Common myeloid progenitor, CD34-positive (primary cell): ENCODE measurements at regions of chr1 and their contacts with region 1.

Region 1: GRCh38 chr1:204363335-204364124 is 3.8 kb upstream of the PLEKHA6 start:
- DNase-seq: peak; percentile 80 to 86 (median 83)
- H3K4me3 ChIP-seq: peak overlapping the region; percentile 20 to 77 (median 54)
- H3K27ac ChIP-seq: no peak overlapping the region
- H3K4me1 ChIP-seq: peaks cover 0 to 59% (median 52%) of the 10 kb centered on the region in 4 experiments
- H3K27me3 ChIP-seq: no peaks in the 10 kb centered on the region

Region 2: GRCh38 chr1:204162231-204163074 is 201.1 kb before region 1 on chr1:
- CTCF ChIA-PET with region 1: interaction called, 113 read pairs
- POLR2A ChIA-PET with region 1: no interaction called
- DNase-seq: peak; percentile 67 to 82 (median 75)
- H3K4me3 ChIP-seq: no peak overlapping the region
- H3K27ac ChIP-seq: no peak overlapping the region
- H3K4me1 ChIP-seq: peaks cover 2 to 20% (median 18%) of the 10 kb centered on the region in 4 experiments
- H3K27me3 ChIP-seq: no peaks in the 10 kb centered on the region

Region 3: DNA sequence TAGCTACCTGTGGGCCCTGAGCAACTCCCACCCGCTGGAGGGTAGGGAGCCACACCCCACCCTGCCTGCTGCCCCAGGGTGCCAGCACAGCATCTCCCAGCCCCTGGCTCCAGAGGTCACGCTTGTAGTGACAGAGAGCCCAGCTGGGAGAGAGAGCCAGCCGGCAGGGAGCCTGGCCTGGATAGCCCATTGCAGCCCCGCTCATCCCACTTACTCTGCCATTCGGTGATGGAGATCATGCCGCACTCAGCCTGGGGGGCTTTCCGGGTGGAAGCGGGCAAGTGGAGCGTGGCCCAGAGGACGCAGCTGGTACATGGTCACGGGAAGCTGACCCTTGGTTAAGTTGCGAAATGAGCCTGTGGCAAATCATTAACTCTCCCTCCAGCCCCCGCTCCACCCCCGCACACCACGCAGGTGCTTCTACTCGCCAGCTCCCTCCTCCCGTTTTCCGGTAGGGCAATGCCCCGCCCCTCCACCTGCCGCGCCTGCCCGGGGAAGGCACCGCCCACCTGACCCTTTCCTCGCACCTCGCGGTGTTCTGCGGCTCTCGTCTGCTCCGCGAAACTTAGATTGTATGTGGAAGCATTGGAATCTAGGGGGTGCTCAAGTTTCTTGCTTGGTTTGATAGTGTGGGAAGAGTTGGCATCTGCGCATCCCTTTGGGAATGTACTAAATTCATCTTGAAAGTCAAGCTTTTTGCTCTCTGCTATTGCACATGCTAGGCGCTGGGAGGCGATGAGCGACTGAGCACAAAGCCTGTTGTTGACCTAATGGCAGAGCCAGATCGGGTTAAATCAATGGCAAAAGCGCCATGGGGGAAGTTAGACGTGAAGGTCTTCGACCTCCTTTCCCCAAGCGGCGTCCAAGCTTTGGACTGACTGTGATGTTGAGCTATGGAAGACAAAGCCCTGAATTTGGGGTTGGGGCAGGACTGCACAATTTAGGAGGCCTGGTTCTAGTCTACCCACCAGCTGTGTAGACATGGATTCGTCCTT is 149.6 kb before region 1 on chr1 and contains the start of gene GOLT1A:
- CTCF ChIA-PET with region 1: interaction called, 74 read pairs
- POLR2A ChIA-PET with region 1: no interaction called
- DNase-seq: peak; percentile 61 to 74 (median 70)
- H3K4me3 ChIP-seq: peak within 1 kb of the TSS; percentile 13 to 75 (median 35)
- H3K27ac ChIP-seq: no peak within 1 kb of the TSS
- H3K4me1 ChIP-seq: peaks cover 0 to 19% (median 16%) of the 10 kb centered on the region in 4 experiments
- H3K27me3 ChIP-seq: no peaks in the 10 kb centered on the region

Region 4: DNA sequence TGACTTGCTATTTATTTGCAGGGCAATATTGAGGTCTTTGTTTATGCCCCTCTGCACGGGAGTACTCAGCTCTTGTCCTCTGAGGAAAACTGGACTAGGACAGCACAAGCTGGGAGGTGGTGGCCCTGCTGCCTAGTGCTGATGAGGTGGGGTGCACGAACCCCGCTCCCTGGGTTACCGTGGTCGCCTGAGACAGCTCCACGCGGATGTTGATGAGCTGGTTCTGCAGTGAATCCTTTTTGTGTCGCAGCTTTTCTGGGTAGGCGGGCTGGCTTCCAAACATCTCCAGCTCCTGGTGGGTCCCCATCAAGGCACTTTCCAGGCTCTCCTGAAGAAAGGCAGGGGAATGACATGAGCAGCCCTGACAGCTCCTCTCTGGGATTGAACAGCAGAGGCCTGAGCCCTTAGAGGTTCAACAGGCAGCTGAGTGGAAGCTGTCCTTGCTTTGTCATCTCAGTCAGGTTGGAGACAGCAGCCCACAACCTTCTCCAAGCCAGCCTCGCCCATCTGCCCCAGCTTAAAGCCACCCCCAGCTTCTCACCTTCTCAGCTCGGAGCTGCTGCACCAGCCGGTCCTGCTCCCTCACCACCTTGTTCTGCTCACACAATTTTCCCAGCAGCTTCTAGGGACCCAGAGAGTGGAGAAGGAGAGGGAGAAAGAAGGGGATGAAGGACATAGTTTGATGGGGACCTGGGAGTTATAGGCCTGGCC is 114.7 kb before region 1 on chr1:
- CTCF ChIA-PET with region 1: interaction called, 314 read pairs
- POLR2A ChIA-PET with region 1: no interaction called
- DNase-seq: no peak
- H3K4me3 ChIP-seq: no peak overlapping the region
- H3K27ac ChIP-seq: no peak overlapping the region
- H3K4me1 ChIP-seq: no peaks in the 10 kb centered on the region
- H3K27me3 ChIP-seq: no peaks in the 10 kb centered on the region

Region 5: GRCh38 chr1:204285406-204286305 is 77.9 kb before region 1 on chr1:
- CTCF ChIA-PET with region 1: interaction called, 79 read pairs
- POLR2A ChIA-PET with region 1: interaction called, 3 read pairs
- DNase-seq: no peak
- H3K4me3 ChIP-seq: peak overlapping the region in 2 of 7 experiments; percentile 56 to 64
- H3K27ac ChIP-seq: peak overlapping the region; percentile 10 to 70
- H3K4me1 ChIP-seq: peaks cover 14 to 61% (median 52%) of the 10 kb centered on the region in 4 experiments
- H3K27me3 ChIP-seq: no peaks in the 10 kb centered on the region

Region 6: GRCh38 chr1:204341380-204341779 is 22.1 kb before region 1 on chr1:
- CTCF ChIA-PET with region 1: interaction called, 55 read pairs
- POLR2A ChIA-PET with region 1: interaction called, 3 read pairs
- DNase-seq: no peak
- H3K4me3 ChIP-seq: no peak overlapping the region
- H3K27ac ChIP-seq: no peak overlapping the region
- H3K4me1 ChIP-seq: peaks cover 0 to 17% (median 8%) of the 10 kb centered on the region in 4 experiments
- H3K27me3 ChIP-seq: no peaks in the 10 kb centered on the region

Region 7: GRCh38 chr1:204377795-204378608 is 14.5 kb after region 1 on chr1:
- CTCF ChIA-PET with region 1: interaction called, 22 read pairs
- POLR2A ChIA-PET with region 1: no interaction called
- DNase-seq: peak in 2 of 3 donors; percentile 60 to 72
- H3K4me3 ChIP-seq: peak overlapping the region; percentile 37 to 75 (median 67)
- H3K27ac ChIP-seq: no peak overlapping the region
- H3K4me1 ChIP-seq: peaks cover 0 to 35% (median 23%) of the 10 kb centered on the region in 4 experiments
- H3K27me3 ChIP-seq: peaks cover 0 to 4% (median 3%) of the 10 kb centered on the region in 5 experiments

Region 8: GRCh38 chr1:204560590-204561150 is 197.1 kb after region 1 on chr1:
- CTCF ChIA-PET with region 1: no interaction called
- POLR2A ChIA-PET with region 1: no interaction called
- DNase-seq: no peak
- H3K4me3 ChIP-seq: no peak overlapping the region
- H3K27ac ChIP-seq: no peak overlapping the region
- H3K4me1 ChIP-seq: no peaks in the 10 kb centered on the region
- H3K27me3 ChIP-seq: no peaks in the 10 kb centered on the region